ENCODE measurements at regions of chr17 and their contacts with region 1.

Region 1: GRCh38 chr17:16438557-16439302 is 23.4 kb downstream of the TRPV2 start:
- DNase-seq: peak; percentile 99
- H3K4me3 ChIP-seq: peak overlapping the region; percentile 71 to 85 (median 76)
- H3K27ac ChIP-seq: peak overlapping the region; percentile 78 to 88 (median 83)
- H3K4me1 ChIP-seq: peaks cover 24 to 49% (median 48%) of the 10 kb centered on the region in 4 donors
- H3K27me3 ChIP-seq: no peaks in the 10 kb centered on the region
- CTCF ChIP-seq: peak in 1 of 3 experiments; percentile 25
- EP300 ChIP-seq: no peak
- POLR2A ChIP-seq: peak; percentile 78

Region 2: GRCh38 chr17:16380640-16381495 is 57.9 kb before region 1 on chr17 and contains the start of gene UBB:
- intact Hi-C with region 1: loop called (anchors 5 kb)
- DNase-seq: peak; percentile 99
- H3K4me3 ChIP-seq: peak within 1 kb of the TSS; percentile 65 to 93 (median 80)
- H3K27ac ChIP-seq: peak within 1 kb of the TSS; percentile 93 to 96 (median 94)
- H3K4me1 ChIP-seq: peaks cover 37 to 44% (median 39%) of the 10 kb centered on the region in 4 donors
- H3K27me3 ChIP-seq: no peaks in the 10 kb centered on the region
- CTCF ChIP-seq: no peak
- EP300 ChIP-seq: no peak
- POLR2A ChIP-seq: peak; percentile 88
- total RNA-seq, gene UBB: 713 to 1,130 (median 983) TPM